Left ventricle myocardium inferior (tissue), 1 donor: ENCODE measurements at regions of chr10 and their contacts with region 1.

Region 1: GRCh38 chr10:68156373-68157185 is 47.3 kb downstream of the MYPN start:
- DNase-seq: no peak
- H3K4me3 ChIP-seq: no peak overlapping the region
- H3K27ac ChIP-seq: peak overlapping the region; percentile 86
- H3K4me1 ChIP-seq: peaks cover 68% of the 10 kb centered on the region
- H3K27me3 ChIP-seq: no peaks in the 10 kb centered on the region
- CTCF ChIP-seq: peak; percentile 86

Region 2: DNA sequence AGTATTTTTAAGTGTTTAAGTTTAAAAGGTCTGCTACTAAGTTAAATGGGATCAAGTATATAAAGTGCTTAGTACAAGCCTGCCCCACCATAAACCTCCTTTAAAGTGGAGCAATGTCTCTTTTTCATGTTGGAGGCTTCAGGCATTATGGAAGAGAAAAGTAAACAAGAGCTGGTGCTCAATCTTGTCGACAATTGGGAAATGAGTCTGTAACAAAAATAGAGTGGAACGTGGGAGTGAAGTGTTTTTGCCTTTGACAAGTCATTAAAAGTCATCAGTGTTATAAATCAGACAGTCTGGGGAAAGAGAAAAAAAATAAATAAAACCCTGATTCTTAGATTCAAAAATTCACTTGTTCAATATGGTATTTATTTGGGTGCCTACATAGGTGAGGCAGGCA is 363.3 kb before region 1 on chr10:
- intact Hi-C with region 1: no loop called
- DNase-seq: no peak
- H3K4me3 ChIP-seq: no peak overlapping the region
- H3K27ac ChIP-seq: no peak overlapping the region
- H3K4me1 ChIP-seq: no peaks in the 10 kb centered on the region
- H3K27me3 ChIP-seq: no peaks in the 10 kb centered on the region
- CTCF ChIP-seq: no peak

Region 3: DNA sequence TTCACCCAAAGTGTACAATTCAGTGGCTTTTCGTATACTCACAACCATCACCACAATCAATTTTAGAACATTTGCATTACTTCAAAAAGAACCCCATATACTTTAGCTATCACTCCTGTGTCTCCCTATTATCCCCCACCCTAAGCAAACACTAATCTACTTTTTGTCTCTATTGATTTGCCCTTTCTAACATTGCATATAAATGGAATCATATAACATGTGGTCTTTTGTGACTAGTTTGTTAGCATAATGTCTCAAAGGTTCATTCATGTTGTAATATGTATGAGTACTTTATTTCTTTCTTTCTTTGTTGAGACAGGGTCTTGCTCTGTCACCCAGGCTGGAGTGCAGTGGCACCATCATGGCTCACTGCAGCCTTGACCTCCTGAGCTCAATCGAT is 297.6 kb before region 1 on chr10:
- intact Hi-C with region 1: loop called (anchors 5 kb)
- DNase-seq: no peak
- H3K4me3 ChIP-seq: no peak overlapping the region
- H3K27ac ChIP-seq: no peak overlapping the region
- H3K4me1 ChIP-seq: no peaks in the 10 kb centered on the region
- H3K27me3 ChIP-seq: no peaks in the 10 kb centered on the region
- CTCF ChIP-seq: no peak

Region 4: DNA sequence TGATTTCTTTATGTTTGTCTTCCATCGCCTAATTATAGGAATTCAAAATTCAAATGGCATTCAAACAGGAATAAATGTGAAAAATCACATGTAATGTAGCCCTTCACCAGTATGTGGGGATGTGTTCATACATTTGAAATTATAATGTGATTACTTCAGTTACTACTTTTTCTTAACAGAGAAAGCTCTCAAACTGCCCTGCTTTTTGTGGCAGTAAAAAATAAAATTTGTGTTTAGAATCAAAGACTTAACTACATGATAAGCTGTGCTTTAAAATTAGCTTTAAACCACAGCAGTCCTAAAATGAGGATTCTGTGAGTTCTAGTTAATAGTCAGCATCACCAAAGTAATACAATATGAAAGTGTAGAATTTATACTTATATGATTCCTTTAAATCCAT is 73.7 kb before region 1 on chr10:
- intact Hi-C with region 1: loop called (anchors 5 kb)
- DNase-seq: no peak
- H3K4me3 ChIP-seq: no peak overlapping the region
- H3K27ac ChIP-seq: no peak overlapping the region
- H3K4me1 ChIP-seq: peaks cover 27% of the 10 kb centered on the region
- H3K27me3 ChIP-seq: peaks cover 4% of the 10 kb centered on the region
- CTCF ChIP-seq: peak; percentile 57